K562 (cell line): ENCODE measurements at regions of chr16 and their contacts with region 1.

Region 1: GRCh38 chr16:68328151-68328859 is 17.5 kb downstream of the PRMT7 start:
- DNase-seq: peak; percentile 78 to 83 (median 82)
- ATAC-seq: peak; percentile 99
- H3K4me3 ChIP-seq: no peak overlapping the region
- H3K27ac ChIP-seq: no peak overlapping the region
- H3K4me1 ChIP-seq: no peaks in the 10 kb centered on the region
- H3K27me3 ChIP-seq: no peaks in the 10 kb centered on the region
- CTCF ChIP-seq: peak; percentile 95 to 96 (median 95)
- EP300 ChIP-seq: no peak
- POLR2A ChIP-seq: no peak
- RAD21 ChIP-seq: peak; percentile 91

Region 2: GRCh38 chr16:68085259-68086071 is 242.8 kb before region 1 on chr16 and contains the start of gene NFATC3:
- CTCF ChIA-PET with region 1: no interaction called
- POLR2A ChIA-PET with region 1: no interaction called
- in situ Hi-C with region 1: no loop called
- intact Hi-C with region 1: no loop called
- DNase-seq: peak; percentile 93 to 99 (median 95)
- ATAC-seq: peak; percentile 70
- H3K4me3 ChIP-seq: peak within 1 kb of the TSS; percentile 72
- H3K27ac ChIP-seq: peak within 1 kb of the TSS; percentile 97
- H3K4me1 ChIP-seq: peaks cover 36 to 38% of the 10 kb centered on the region in 2 experiments
- H3K27me3 ChIP-seq: no peaks in the 10 kb centered on the region
- CTCF ChIP-seq: 0 out of 6 replicates have a peak, but pooled peaks of 1 of the 3 experiments have one; percentile 13
- EP300 ChIP-seq: no peak
- POLR2A ChIP-seq: peak; percentile 12
- RAD21 ChIP-seq: no peak
- polyA plus RNA-seq, gene NFATC3: 15.7 to 19.1 TPM

Region 3: GRCh38 chr16:68214726-68215125 is 113.6 kb before region 1 on chr16:
- CTCF ChIA-PET with region 1: no interaction called
- POLR2A ChIA-PET with region 1: no interaction called
- in situ Hi-C with region 1: no loop called
- intact Hi-C with region 1: no loop called
- DNase-seq: no peak
- ATAC-seq: no peak
- H3K4me3 ChIP-seq: no peak overlapping the region
- H3K27ac ChIP-seq: no peak overlapping the region
- H3K4me1 ChIP-seq: peaks cover 0 to 2% of the 10 kb centered on the region in 2 experiments; a peak in 2 of 5 replicates
- H3K27me3 ChIP-seq: no peaks in the 10 kb centered on the region
- CTCF ChIP-seq: no peak
- EP300 ChIP-seq: no peak
- POLR2A ChIP-seq: no peak
- RAD21 ChIP-seq: no peak

Region 4: GRCh38 chr16:68264128-68265077 is 63.9 kb before region 1 on chr16 and contains the start of gene SLC7A6:
- CTCF ChIA-PET with region 1: interaction called, 73 read pairs
- POLR2A ChIA-PET with region 1: interaction called, 12 read pairs
- in situ Hi-C with region 1: loop called (anchors 5 kb)
- intact Hi-C with region 1: loop called (anchors 1 kb)
- DNase-seq: peak; percentile 91 to 93 (median 93)
- ATAC-seq: peak; percentile 84
- H3K4me3 ChIP-seq: peak within 1 kb of the TSS; percentile 97
- H3K27ac ChIP-seq: peak within 1 kb of the TSS; percentile 95
- H3K4me1 ChIP-seq: peaks cover 20 to 28% of the 10 kb centered on the region in 2 experiments
- H3K27me3 ChIP-seq: no peaks in the 10 kb centered on the region
- CTCF ChIP-seq: peak; percentile 82 to 84 (median 84)
- EP300 ChIP-seq: no peak
- POLR2A ChIP-seq: peak; percentile 76
- RAD21 ChIP-seq: peak; percentile 46 to 68
- polyA plus RNA-seq, gene SLC7A6: 12.6 to 12.8 TPM

Region 5: GRCh38 chr16:68356249-68356918 is 28.1 kb after region 1 on chr16:
- CTCF ChIA-PET with region 1: no interaction called
- POLR2A ChIA-PET with region 1: no interaction called
- in situ Hi-C with region 1: no loop called
- intact Hi-C with region 1: no loop called
- DNase-seq: no peak
- ATAC-seq: no peak
- H3K4me3 ChIP-seq: no peak overlapping the region
- H3K27ac ChIP-seq: no peak overlapping the region
- H3K4me1 ChIP-seq: peaks cover 0 to 21% of the 10 kb centered on the region in 2 experiments; a peak in 1 of 5 replicates
- H3K27me3 ChIP-seq: no peaks in the 10 kb centered on the region
- CTCF ChIP-seq: no peak
- EP300 ChIP-seq: no peak
- POLR2A ChIP-seq: no peak
- RAD21 ChIP-seq: no peak